Activated CD4-positive, alpha-beta T cell treated with anti-CD3 and anti-CD28 coated beads, Interleukin-2, amount 10 ng/mL, durations not matched to agents 24 days and 14 days (primary cell): ENCODE measurements at regions of chrX and their contacts with region 1.

Region 1: GRCh38 chrX:45710081-45710801 is 509.6 kb upstream of the DIPK2B start:
- DNase-seq: peak; percentile 71
- H3K4me3 Mint-ChIP-seq: peak overlapping the region; percentile 49
- H3K27ac Mint-ChIP-seq: peak overlapping the region; percentile 81
- H3K4me1 Mint-ChIP-seq: peaks cover 46% of the 10 kb centered on the region
- H3K27me3 Mint-ChIP-seq: no peaks in the 10 kb centered on the region

Region 2: DNA sequence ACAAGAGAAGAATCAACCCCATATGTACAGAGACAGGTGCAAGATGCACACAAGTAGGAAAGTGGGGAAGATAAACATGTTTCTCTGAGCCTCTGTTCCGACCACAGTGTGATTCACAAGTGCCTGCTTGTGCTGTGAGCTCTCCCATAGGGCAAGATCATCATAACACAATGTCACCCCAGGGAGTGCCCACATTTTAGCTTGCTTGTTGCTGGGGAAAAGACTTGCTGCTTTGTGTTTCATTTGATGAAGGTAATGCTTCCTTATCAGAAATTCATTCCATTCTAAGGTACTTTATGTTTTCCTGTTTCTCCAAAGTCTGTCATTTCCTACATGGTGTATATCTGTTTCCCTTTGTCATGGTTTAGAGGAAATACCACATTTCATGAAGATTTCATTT is 205.0 kb before region 1 on chrX:
- intact Hi-C with region 1: loop called (anchors 5 kb)
- DNase-seq: no peak
- H3K4me3 Mint-ChIP-seq: no peak overlapping the region
- H3K27ac Mint-ChIP-seq: peak overlapping the region; percentile 71
- H3K4me1 Mint-ChIP-seq: peaks cover 6% of the 10 kb centered on the region
- H3K27me3 Mint-ChIP-seq: no peaks in the 10 kb centered on the region

Region 3: DNA sequence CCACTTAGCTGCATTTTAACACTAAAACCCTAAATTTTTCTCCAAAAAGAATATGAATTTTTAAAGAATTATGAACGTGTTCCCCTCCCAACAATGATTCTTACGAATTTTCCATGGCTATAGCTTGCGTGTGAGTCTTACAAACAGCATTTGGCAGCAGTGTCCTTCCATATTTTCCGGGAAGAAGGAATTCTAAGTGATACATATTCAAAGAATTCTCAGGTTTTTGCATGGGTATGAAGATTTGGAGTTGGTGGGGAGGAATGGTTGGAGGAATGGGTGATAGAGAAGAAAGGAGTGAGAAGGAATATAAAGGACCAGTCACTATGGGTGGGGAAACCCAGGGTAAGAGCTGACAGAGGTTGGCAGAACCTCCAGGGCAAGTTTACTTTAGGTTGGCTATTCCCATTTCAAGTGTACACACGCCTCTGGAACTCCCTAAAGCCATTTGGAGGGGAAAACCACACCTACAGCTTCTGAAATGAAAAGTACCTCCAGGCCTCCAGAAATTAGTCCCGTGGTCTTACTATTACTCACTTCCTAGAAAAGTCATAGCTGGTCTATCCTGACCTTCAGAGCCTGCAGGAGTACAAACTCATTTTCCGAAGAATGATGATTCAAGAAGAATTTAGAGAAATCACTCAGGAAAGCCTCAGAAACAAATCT is 88.7 kb before region 1 on chrX:
- intact Hi-C with region 1: loop called (anchors 1 kb)
- DNase-seq: peak; percentile 51
- H3K4me3 Mint-ChIP-seq: peak overlapping the region; percentile 35
- H3K27ac Mint-ChIP-seq: peak overlapping the region; percentile 89
- H3K4me1 Mint-ChIP-seq: peaks cover 18% of the 10 kb centered on the region
- H3K27me3 Mint-ChIP-seq: no peaks in the 10 kb centered on the region

Region 4: GRCh38 chrX:45758319-45758718 is 48.1 kb after region 1 on chrX:
- intact Hi-C with region 1: loop called (anchors 1 kb)
- DNase-seq: peak; percentile 84
- H3K4me3 Mint-ChIP-seq: peak overlapping the region; percentile 82
- H3K27ac Mint-ChIP-seq: peak overlapping the region; percentile 99
- H3K4me1 Mint-ChIP-seq: peaks cover 62% of the 10 kb centered on the region
- H3K27me3 Mint-ChIP-seq: no peaks in the 10 kb centered on the region

Region 5: DNA sequence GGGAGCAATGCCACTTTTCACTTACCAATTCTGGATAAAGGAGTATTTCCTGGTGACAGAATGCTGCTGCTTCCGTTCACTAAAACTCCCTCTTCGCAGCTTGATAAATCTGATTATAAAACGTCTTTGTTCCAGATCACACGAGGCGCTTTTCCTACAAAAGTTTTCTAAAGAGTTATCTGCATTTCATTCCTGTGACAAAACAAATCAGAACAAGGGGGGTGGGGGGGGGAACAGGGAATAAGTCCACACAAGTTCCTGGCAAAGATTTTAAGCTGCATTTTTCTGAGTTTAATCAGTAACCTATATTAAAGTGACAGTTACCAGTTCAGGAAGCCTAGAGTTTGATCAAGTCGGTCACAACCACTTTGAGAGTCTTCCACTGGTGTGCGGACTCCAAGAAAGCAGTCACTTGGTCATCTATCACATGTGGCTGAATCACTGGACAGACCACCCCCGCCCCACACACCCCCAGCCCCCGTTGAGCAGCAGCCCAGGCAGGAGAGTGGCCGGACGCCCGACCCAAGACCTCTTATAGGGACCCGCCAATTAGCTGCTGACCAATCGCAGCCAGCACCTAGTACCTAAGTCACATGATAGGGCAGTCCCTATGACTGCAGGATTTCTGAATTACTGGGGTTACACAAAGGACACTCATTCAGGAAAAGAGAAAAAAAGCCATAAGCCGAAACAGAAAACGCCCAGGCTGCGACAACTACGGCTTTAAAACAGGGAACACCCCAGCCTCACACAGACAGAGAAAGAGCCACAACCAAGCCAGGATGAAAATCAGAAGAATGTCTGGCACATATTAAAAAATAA is 59.7 kb after region 1 on chrX:
- intact Hi-C with region 1: loop called (anchors 2 kb)
- DNase-seq: peak; percentile 77
- H3K4me3 Mint-ChIP-seq: peak overlapping the region; percentile 84
- H3K27ac Mint-ChIP-seq: peak overlapping the region; percentile 95
- H3K4me1 Mint-ChIP-seq: peaks cover 40% of the 10 kb centered on the region
- H3K27me3 Mint-ChIP-seq: no peaks in the 10 kb centered on the region

Region 6: DNA sequence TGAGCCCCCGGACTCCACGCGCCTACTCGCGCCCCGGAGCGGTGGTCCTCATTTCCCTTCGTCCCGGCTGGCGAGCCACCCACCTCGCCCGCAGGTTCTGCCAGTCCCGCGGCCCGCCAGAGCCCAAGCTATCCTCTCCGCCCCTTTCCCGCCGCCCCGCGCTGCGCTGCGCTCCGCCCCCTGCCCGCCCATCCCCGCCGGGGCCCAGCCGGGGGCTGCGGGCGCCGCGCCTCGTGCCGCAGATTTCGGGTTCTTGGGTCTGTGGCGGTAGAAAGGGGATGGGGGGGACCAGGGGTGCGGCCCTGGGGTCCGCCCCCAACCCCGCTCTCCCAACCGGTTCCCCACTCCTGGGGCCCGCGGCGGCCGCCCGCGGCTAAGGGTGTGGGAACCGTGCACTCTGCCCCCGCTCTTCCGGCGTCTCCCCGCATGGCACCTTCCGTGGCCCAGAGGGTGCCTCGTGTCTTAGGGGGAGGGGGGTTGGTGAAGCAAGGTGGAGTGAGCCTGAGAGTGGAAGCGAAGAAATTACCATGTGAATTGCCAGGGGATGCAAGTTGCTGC is 141.3 kb after region 1 on chrX:
- intact Hi-C with region 1: loop called (anchors 2 kb)
- DNase-seq: peak; percentile 85
- H3K4me3 Mint-ChIP-seq: peak overlapping the region; percentile 100
- H3K27ac Mint-ChIP-seq: peak overlapping the region; percentile 94
- H3K4me1 Mint-ChIP-seq: peaks cover 26% of the 10 kb centered on the region
- H3K27me3 Mint-ChIP-seq: no peaks in the 10 kb centered on the region